T-cell (primary cell): ENCODE measurements at regions of chr16 and their contacts with region 1.

Region 1: GRCh38 chr16:58755989-58756649 is 22.0 kb upstream of the GOT2 start:
- DNase-seq: peak; percentile 55 to 87 (median 73)
- ATAC-seq: peak; percentile 88 to 95 (median 95)
- H3K4me3 ChIP-seq: peak overlapping the region in 1 of 2 donors; percentile 16
- H3K4me3 Mint-ChIP-seq: peak overlapping the region; percentile 51 to 62 (median 61)
- H3K27ac ChIP-seq: peak overlapping the region; percentile 30
- H3K27ac Mint-ChIP-seq: peak overlapping the region; percentile 79 to 85
- H3K4me1 ChIP-seq: peaks cover 0 to 7% of the 10 kb centered on the region in 2 experiments
- H3K4me1 Mint-ChIP-seq: peaks cover 9% of the 10 kb centered on the region in 3 donors
- H3K27me3 ChIP-seq: peaks cover 0 to 2% of the 10 kb centered on the region in 2 experiments
- H3K27me3 Mint-ChIP-seq: no peaks in the 10 kb centered on the region

Region 2: DNA sequence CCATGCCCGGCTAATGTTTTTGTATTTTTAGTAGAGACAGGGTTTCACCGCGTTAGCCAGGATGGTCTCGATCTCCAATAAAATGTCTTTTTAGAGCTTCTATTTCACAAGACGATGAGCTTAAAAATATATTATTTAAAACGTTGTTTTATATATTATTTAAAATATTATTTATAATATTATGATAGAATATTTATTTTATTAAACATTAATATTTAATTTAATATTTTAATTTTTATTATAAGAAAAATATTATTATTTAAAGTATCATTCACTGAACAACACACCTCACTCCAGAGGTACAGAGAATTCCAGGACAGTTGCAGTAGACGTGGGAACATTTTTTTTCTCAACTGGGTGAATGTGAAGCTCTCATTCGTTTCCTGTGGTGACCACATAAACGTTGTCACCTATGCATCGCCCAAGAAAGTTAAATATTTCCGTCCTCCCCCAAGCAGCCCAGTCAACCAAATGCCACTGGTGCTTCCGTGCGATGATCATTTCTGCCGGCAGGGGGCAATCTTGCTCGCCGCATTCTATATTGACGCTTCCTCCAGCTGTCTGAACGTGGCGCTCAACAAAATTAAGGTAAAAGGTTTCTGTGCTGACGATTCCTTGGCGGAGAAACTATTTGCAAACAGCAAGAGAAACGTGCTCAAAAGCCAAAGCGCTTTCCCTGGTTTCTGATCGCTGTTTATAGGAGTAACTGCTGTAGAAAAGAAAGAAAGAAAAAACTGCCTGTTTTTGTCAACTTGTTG is 419.6 kb before region 1 on chr16:
- CTCF ChIA-PET with region 1: interaction called, 10 to 28 read pairs
- POLR2A ChIA-PET with region 1: no interaction called
- DNase-seq: peak; percentile 50 to 86 (median 76)
- ATAC-seq: peak; percentile 82 to 93 (median 86)
- H3K4me3 ChIP-seq: no peak overlapping the region
- H3K4me3 Mint-ChIP-seq: peak overlapping the region; percentile 55 to 62 (median 61)
- H3K27ac ChIP-seq: no peak overlapping the region
- H3K27ac Mint-ChIP-seq: no peak overlapping the region
- H3K4me1 ChIP-seq: peaks cover 0 to 7% of the 10 kb centered on the region in 2 experiments
- H3K4me1 Mint-ChIP-seq: peaks cover 6 to 7% (median 7%) of the 10 kb centered on the region in 3 donors
- H3K27me3 ChIP-seq: peaks cover 0 to 11% of the 10 kb centered on the region in 2 experiments
- H3K27me3 Mint-ChIP-seq: peaks cover 5 to 8% of the 10 kb centered on the region in 2 donors

Region 3: DNA sequence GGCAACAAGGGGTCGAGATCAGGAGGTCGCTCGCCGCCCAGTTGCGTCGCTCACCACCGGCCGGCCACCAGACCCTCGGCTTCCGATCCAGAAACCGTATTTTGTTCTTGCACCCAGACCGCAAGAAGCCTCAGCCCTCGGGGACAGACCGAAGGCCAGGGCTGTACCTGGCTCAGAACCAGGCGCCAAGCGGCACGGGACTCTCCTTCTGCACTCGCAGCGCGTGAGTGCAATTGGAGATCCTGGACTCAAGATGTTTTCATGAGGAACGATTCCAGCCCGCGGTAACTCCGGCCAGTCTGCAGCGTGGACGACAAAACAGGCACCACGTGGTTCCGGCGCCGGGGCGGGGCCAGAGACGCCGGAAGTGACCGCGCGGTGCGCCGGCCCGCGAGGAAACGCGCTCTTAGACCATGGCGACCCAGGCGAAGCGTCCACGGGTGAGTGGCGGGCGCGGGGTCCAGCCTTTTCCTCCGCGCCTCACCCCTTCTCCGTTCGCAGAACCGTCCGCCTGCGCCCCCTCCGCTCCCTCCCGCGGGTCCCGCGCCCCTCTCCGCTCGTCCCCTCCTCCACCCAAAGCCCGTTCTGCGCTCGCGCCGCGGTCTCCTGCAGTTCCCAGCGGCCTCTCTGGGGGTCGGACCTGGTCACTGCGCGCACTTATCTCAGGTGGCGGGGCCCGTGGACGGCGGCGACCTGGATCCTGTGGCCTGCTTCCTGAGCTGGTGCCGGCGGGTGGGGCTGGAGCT is 240.8 kb before region 1 on chr16 and contains the start of gene SETD6:
- CTCF ChIA-PET with region 1: interaction called, 10 to 27 read pairs
- POLR2A ChIA-PET with region 1: no interaction called
- DNase-seq: peak in 30 of 35 experiments; percentile 26 to 73 (median 50)
- ATAC-seq: peak; percentile 71 to 81 (median 78)
- H3K4me3 ChIP-seq: peak within 1 kb of the TSS; percentile 83 to 87
- H3K4me3 Mint-ChIP-seq: peak within 1 kb of the TSS; percentile 87 to 92 (median 89)
- H3K27ac ChIP-seq: peak within 1 kb of the TSS; percentile 53
- H3K27ac Mint-ChIP-seq: peak within 1 kb of the TSS; percentile 89 to 91
- H3K4me1 ChIP-seq: peaks cover 4 to 22% of the 10 kb centered on the region in 2 experiments
- H3K4me1 Mint-ChIP-seq: peaks cover 19 to 34% (median 29%) of the 10 kb centered on the region in 3 donors
- H3K27me3 ChIP-seq: peaks cover 0 to 2% of the 10 kb centered on the region in 2 experiments
- H3K27me3 Mint-ChIP-seq: no peaks in the 10 kb centered on the region
- total RNA-seq, gene SETD6: 29.6 to 44.2 (median 35.1) TPM

Region 4: DNA sequence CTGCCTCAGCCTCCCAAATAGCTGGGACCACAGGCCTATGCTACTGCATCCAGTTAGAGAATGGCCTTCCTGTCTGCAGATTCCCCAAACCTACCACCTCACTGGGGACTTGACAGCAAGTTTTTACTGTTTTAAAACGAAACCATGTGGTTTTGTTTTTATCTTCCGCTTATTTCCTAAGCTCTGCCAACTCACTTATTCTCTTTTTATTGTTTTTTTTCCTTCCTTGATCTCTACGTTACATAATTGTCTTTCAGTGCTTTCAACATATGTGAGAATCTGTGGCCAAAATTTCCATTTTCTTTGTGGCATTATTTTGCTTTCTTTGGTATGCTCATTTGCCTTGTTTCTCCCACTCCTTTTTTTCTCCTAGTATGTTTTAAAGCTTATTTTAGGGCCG is 57.0 kb before region 1 on chr16:
- CTCF ChIA-PET with region 1: interaction called in 1 of 2 experiments, 10 read pairs
- POLR2A ChIA-PET with region 1: no interaction called
- DNase-seq: no peak
- ATAC-seq: no peak
- H3K4me3 ChIP-seq: no peak overlapping the region
- H3K4me3 Mint-ChIP-seq: peak overlapping the region in 1 of 3 donors; percentile 39
- H3K27ac ChIP-seq: no peak overlapping the region
- H3K27ac Mint-ChIP-seq: peak overlapping the region in 1 of 2 donors; percentile 1
- H3K4me1 ChIP-seq: no peaks in the 10 kb centered on the region
- H3K4me1 Mint-ChIP-seq: peaks cover 4 to 6% (median 4%) of the 10 kb centered on the region in 3 donors
- H3K27me3 ChIP-seq: no peaks in the 10 kb centered on the region
- H3K27me3 Mint-ChIP-seq: no peaks in the 10 kb centered on the region